ENCODE measurements at regions of chr3 and their contacts with region 1.

Region 1: GRCh38 chr3:16290007-16290826 is 25.2 kb downstream of the OXNAD1 start:
- DNase-seq: peak; percentile 69
- ATAC-seq: peak; percentile 63
- H3K4me3 ChIP-seq: no peak overlapping the region
- H3K4me3 Mint-ChIP-seq: no peak overlapping the region
- H3K27ac ChIP-seq: peak overlapping the region in 1 of 2 donors; percentile 39
- H3K27ac Mint-ChIP-seq: no peak overlapping the region
- H3K4me1 ChIP-seq: peaks cover 23 to 29% of the 10 kb centered on the region in 2 donors
- H3K4me1 Mint-ChIP-seq: peaks cover 34% of the 10 kb centered on the region
- H3K27me3 ChIP-seq: no peaks in the 10 kb centered on the region
- H3K27me3 Mint-ChIP-seq: no peaks in the 10 kb centered on the region
- CTCF ChIP-seq: peak; percentile 96

Region 2: DNA sequence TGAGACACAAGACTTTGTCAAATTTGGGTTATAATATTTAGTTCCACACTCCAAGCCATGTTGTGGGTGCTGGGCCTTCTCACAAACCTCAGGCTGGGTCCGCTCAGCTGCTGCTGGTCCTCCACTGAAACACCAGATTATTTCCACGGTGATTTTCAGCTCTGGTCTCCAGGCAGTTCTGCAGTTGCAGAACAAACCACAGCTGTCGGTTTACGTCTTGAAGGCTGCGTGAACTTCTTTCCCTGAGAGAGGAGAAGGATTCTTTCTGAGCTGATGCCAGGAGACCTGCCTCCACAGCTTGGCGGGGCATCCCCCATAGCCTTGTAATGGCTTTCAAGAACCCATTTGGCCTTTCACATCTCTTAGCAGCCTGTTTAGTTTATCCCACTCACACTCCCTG is 99.5 kb before region 1 on chr3:
- CTCF ChIA-PET with region 1: no interaction called
- POLR2A ChIA-PET with region 1: no interaction called
- intact Hi-C with region 1: no loop called
- DNase-seq: no peak
- ATAC-seq: no peak
- H3K4me3 ChIP-seq: no peak overlapping the region
- H3K4me3 Mint-ChIP-seq: no peak overlapping the region
- H3K27ac ChIP-seq: no peak overlapping the region
- H3K27ac Mint-ChIP-seq: no peak overlapping the region
- H3K4me1 ChIP-seq: no peaks in the 10 kb centered on the region
- H3K4me1 Mint-ChIP-seq: no peaks in the 10 kb centered on the region
- H3K27me3 ChIP-seq: no peaks in the 10 kb centered on the region
- H3K27me3 Mint-ChIP-seq: no peaks in the 10 kb centered on the region
- CTCF ChIP-seq: no peak

Region 3: GRCh38 chr3:16300881-16301359 is 10.7 kb after region 1 on chr3:
- CTCF ChIA-PET with region 1: interaction called, 20 read pairs
- POLR2A ChIA-PET with region 1: no interaction called
- intact Hi-C with region 1: no loop called
- DNase-seq: peak; percentile 49
- ATAC-seq: peak; percentile 68
- H3K4me3 ChIP-seq: peak overlapping the region in 1 of 5 experiments; percentile 13
- H3K4me3 Mint-ChIP-seq: peak overlapping the region; percentile 77
- H3K27ac ChIP-seq: peak overlapping the region; percentile 14 to 22
- H3K27ac Mint-ChIP-seq: peak overlapping the region; percentile 80
- H3K4me1 ChIP-seq: peaks cover 32 to 36% of the 10 kb centered on the region in 2 donors
- H3K4me1 Mint-ChIP-seq: peaks cover 49% of the 10 kb centered on the region
- H3K27me3 ChIP-seq: no peaks in the 10 kb centered on the region
- H3K27me3 Mint-ChIP-seq: no peaks in the 10 kb centered on the region
- CTCF ChIP-seq: no peak

Region 4: DNA sequence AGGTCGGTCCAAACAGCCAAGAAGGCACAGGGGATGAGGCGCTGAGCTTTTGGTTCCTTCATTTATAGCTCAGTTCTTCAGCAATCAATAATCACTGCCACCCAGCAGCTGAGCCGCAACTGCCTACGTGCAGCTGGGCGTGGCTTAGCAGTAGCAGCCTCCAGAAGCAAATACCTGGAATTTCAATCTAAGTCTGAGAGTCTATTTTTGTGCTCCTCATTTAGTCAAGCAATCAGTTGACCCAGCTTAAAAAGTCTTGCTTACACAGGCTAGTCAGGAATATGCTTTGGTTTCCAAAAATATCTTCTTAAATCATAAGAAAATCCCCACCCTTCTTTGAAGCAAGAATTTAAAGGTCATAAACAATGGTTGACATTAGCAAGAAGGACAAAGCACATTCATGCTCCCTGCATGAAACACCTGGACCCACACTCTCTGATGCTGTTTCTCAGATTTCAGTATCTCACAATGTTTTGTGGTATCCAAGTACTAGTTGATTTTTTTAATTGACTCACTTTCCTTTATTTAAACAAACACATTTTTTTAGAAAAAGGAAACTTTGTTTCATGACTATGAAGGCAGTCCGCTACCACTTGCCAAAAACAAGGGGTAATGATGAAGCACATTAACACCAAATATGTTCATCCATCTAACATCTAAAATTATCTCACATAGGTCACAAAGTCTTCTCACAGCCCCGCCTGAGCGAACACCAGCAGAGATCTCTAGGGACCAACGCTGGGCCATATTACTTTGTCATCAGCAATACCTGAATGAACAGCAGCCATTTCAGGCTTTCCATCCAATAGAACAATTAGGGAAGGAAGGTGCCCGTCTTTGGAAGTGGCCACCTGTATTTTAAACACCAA is 80.9 kb after region 1 on chr3:
- CTCF ChIA-PET with region 1: interaction called, 4 read pairs
- POLR2A ChIA-PET with region 1: no interaction called
- intact Hi-C with region 1: loop called (anchors 5 kb)
- DNase-seq: peak; percentile 77
- ATAC-seq: peak; percentile 53
- H3K4me3 ChIP-seq: peak overlapping the region in 1 of 5 experiments; percentile 15
- H3K4me3 Mint-ChIP-seq: peak overlapping the region; percentile 66
- H3K27ac ChIP-seq: peak overlapping the region; percentile 62 to 87
- H3K27ac Mint-ChIP-seq: peak overlapping the region; percentile 91
- H3K4me1 ChIP-seq: peaks cover 75 to 77% of the 10 kb centered on the region in 2 donors
- H3K4me1 Mint-ChIP-seq: peaks cover 73% of the 10 kb centered on the region
- H3K27me3 ChIP-seq: no peaks in the 10 kb centered on the region
- H3K27me3 Mint-ChIP-seq: no peaks in the 10 kb centered on the region
- CTCF ChIP-seq: no peak

Region 5: DNA sequence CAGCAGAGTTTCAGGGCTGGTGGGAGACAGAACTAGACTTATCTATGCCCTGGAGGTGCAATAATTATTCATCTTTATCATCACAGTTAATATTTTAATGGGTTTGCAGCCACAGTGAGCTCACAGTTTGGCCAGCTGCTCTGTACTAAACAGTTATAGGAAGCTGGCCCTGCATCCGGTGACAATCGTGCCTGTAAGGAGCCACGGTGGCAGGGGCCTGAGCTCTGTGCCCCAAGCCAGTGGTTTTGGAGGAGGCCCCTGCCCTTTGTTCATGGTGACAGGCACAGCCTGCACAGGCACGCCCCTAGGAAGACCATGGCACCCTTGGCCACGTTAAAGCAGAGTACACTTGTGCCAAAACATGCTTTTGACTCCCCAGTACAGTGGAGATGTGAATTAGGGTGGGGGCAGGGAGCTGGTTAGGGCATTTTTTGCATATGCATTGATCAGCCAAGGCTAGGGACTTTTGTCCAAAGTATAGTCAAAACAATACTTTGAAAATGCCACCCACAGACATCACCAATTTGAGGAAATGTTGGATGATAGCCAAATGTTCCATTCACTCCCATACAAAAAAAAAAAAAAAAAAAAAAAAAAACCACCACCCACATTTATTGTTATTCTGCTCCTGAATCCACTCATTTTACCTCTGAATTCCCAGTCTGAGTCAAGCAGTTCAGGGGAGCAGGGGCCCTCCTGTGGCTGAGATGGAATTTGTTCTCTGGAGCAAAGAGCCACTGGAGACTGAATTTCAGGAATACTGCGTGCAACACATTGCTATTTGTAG is 226.7 kb after region 1 on chr3:
- CTCF ChIA-PET with region 1: interaction called, 21 read pairs
- POLR2A ChIA-PET with region 1: no interaction called
- intact Hi-C with region 1: no loop called
- DNase-seq: peak; percentile 43
- ATAC-seq: no peak
- H3K4me3 ChIP-seq: peak overlapping the region in 1 of 5 experiments; percentile 32
- H3K4me3 Mint-ChIP-seq: peak overlapping the region; percentile 51
- H3K27ac ChIP-seq: peak overlapping the region; percentile 53 to 97
- H3K27ac Mint-ChIP-seq: peak overlapping the region; percentile 80
- H3K4me1 ChIP-seq: peaks cover 79 to 92% of the 10 kb centered on the region in 2 donors
- H3K4me1 Mint-ChIP-seq: peaks cover 82% of the 10 kb centered on the region
- H3K27me3 ChIP-seq: no peaks in the 10 kb centered on the region
- H3K27me3 Mint-ChIP-seq: no peaks in the 10 kb centered on the region
- CTCF ChIP-seq: no peak

Region 6: DNA sequence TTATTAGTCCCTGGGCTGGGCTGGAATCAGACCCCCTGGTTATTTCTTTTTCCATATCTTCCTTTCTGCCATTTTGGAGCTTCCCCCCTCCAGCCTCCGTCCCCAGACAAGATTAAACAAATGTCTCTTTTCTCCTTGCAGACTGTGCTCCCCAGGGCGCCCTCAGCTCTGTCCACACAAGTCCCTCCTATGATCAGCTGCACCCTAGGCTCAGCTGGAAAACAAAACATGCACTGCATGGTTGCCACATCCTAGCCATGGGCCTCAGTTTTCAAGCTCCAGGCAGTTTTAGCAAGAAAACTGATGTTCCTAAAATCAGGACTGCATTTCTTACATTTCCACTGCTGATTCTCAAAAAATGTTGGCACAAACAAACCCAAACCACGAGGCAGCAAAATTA is 246.8 kb after region 1 on chr3:
- CTCF ChIA-PET with region 1: interaction called, 70 read pairs
- POLR2A ChIA-PET with region 1: no interaction called
- intact Hi-C with region 1: no loop called
- DNase-seq: no peak
- ATAC-seq: no peak
- H3K4me3 ChIP-seq: no peak overlapping the region
- H3K4me3 Mint-ChIP-seq: no peak overlapping the region
- H3K27ac ChIP-seq: no peak overlapping the region
- H3K27ac Mint-ChIP-seq: no peak overlapping the region
- H3K4me1 ChIP-seq: peaks cover under 1 to 2% of the 10 kb centered on the region in 2 donors
- H3K4me1 Mint-ChIP-seq: peaks cover 2% of the 10 kb centered on the region
- H3K27me3 ChIP-seq: peaks cover 0 to 9% (median 3%) of the 10 kb centered on the region in 4 experiments
- H3K27me3 Mint-ChIP-seq: peaks cover 8% of the 10 kb centered on the region
- CTCF ChIP-seq: no peak

Region 7: DNA sequence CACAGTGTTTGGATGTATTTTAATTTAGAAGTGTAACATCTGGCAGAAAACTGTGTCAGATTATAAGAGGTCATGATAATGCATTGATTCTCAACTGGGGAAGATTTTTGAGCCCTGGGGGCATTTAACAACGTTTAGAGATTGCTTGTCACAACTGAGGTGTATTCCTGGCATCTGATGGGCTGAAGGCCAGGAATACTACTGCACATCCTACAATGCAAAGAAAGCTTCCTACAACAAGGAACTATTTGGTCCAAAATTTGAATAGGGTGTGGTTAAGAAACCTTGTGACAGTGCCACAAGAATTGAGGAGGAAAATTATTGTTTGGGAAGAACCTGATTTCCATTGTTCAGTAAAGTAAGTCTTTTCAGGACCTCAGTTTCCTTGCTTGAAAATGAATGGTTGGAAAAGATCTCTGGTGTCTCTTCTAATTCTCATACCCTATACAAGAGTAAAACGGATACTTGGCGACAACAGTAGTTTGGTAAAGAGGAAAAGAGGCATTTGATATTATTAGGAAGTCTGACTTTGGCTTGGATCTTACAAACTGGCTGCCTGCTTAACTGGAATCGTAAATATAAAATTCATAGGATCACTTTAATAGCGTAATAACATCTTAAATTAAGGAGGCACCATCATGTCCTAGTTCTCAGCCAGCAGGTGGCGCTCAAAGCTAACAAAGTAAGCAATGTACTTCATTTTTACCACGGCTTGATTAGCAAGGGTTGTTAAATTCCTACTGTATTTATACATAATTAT is 310.7 kb after region 1 on chr3:
- CTCF ChIA-PET with region 1: interaction called, 10 read pairs
- POLR2A ChIA-PET with region 1: no interaction called
- intact Hi-C with region 1: no loop called
- DNase-seq: peak; percentile 85
- ATAC-seq: peak; percentile 51
- H3K4me3 ChIP-seq: no peak overlapping the region
- H3K4me3 Mint-ChIP-seq: no peak overlapping the region
- H3K27ac ChIP-seq: no peak overlapping the region
- H3K27ac Mint-ChIP-seq: no peak overlapping the region
- H3K4me1 ChIP-seq: peaks cover 3% of the 10 kb centered on the region in 2 donors
- H3K4me1 Mint-ChIP-seq: peaks cover 2% of the 10 kb centered on the region
- H3K27me3 ChIP-seq: peaks cover 0 to 2% (median 0%) of the 10 kb centered on the region in 4 experiments
- H3K27me3 Mint-ChIP-seq: peaks cover 5% of the 10 kb centered on the region
- CTCF ChIP-seq: peak; percentile 93

Measured in B cell (primary cell).